Activated T-helper 2 cell treated with anti-CD3 and anti-CD28 coated beads, Interferon-gamma antibody, Interleukin-2, Interleukin-4, amounts not matched to agents 10 μg/mL and 5 μg/mL and 100 μg/mL, durations not matched to agents 14 hours and 24 hours and 36 hours (primary cell): ENCODE measurements at regions of chr12 and their contacts with region 1.

Region 1: DNA sequence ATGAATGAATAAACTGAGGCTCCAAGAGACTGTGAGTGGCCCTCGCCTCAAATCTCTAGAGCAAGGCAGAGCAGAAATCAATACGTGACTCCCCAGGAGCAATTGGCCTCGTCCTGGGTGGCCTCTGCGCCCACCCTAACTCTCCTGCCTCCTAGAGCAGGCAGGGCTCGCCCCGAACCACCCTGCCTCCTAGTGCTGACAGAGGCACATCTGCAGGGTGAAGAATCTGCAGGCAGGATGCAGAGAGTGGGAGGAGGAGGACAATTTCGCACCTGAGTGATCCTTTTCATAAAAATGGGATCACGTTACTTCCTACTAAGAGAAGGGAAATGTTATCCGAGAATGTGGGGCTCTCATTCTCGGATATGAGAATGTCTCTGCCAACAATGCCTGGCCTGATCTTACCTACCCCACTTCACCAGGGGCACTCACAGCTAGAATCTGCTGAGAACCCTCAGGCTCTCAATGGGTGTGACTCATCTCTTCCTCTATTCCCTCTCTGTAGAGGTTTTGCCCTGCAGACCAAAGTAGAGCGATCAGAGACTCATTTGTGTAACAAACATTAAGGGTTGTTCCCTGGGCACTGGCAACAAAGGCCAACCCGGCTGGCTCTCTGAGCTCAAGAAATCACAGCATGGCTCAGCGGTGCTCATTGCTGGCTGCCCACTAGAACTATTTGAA is 61.7 kb upstream of the BCL2L14 start:
- DNase-seq: peak; percentile 47
- H3K4me3 Mint-ChIP-seq: peak overlapping the region; percentile 60
- H3K27ac Mint-ChIP-seq: peak overlapping the region; percentile 96
- H3K4me1 Mint-ChIP-seq: peaks cover 77% of the 10 kb centered on the region
- H3K27me3 Mint-ChIP-seq: peaks cover 5% of the 10 kb centered on the region

Region 2: DNA sequence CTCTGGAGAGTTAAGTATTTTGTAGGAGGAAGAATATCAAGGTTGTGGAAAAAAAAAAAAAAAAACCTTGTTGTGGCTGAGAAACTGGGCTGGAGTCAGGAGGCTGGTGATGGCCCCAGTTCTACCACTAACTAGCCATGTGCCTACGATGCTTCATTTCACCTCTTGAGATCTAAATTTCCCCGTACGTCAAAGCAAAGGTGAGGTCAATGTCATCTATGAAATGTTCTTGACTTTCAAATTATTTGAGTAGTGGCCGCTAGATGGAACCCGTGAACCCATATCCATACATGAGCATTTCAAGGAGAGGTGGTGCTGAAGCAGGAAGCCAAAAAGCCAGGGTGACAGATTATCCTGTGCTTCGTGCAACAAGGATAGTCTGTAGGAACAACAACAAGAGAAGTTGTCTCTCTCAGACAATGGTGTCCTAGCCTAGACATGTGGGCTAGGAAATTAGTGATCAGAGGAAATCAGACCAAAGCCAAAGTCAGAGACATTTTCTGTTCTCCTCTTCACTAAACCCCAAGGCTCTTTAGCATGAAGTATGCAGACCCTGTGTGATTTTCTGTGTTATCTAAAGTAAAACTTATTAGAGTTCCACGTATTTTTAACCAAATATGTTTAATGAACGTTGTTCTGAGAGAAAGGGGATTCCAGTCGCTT is 455.1 kb before region 1 on chr12:
- intact Hi-C with region 1: loop called (anchors 1 kb)
- DNase-seq: peak; percentile 34
- H3K4me3 Mint-ChIP-seq: no peak overlapping the region
- H3K27ac Mint-ChIP-seq: peak overlapping the region; percentile 31
- H3K4me1 Mint-ChIP-seq: peaks cover 22% of the 10 kb centered on the region
- H3K27me3 Mint-ChIP-seq: peaks cover 50% of the 10 kb centered on the region

Region 3: DNA sequence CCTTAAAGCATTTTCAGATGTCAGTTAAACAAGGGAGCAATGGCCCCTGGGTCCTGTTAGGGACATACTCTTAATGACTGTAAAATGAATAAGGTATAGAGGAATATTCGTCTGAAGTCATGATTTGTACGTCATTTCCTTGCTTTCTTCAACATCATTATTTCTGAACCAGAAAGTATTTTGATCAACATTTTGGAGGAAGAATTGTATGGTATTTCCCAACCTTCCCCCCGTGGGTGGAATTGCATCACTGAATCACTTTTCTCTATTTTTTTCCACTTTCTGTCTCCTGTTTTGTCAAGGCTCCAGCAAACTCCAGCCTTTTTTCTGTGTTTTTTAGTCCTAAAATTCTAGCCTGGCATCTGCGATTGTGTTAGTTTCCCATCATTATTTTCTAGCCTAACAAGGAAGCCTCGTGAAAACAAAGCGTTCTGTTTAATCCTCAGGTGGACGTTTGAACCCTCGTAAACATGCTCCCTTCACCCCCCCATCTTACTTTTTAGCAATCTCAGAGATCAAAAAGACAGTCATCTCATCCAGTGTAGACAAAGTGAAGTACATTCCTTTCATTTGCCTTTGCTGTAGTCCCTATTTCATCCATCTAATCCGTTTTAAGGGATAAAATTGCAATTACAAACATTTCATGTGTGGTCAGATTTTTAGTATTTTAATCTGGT is 297.3 kb before region 1 on chr12:
- intact Hi-C with region 1: loop called (anchors 1 kb)
- DNase-seq: no peak
- H3K4me3 Mint-ChIP-seq: no peak overlapping the region
- H3K27ac Mint-ChIP-seq: no peak overlapping the region
- H3K4me1 Mint-ChIP-seq: peaks cover 42% of the 10 kb centered on the region
- H3K27me3 Mint-ChIP-seq: no peaks in the 10 kb centered on the region

Region 4: GRCh38 chr12:11771356-11771755 is 237.7 kb before region 1 on chr12:
- intact Hi-C with region 1: loop called (anchors 1 kb)
- DNase-seq: no peak
- H3K4me3 Mint-ChIP-seq: no peak overlapping the region
- H3K27ac Mint-ChIP-seq: peak overlapping the region; percentile 91
- H3K4me1 Mint-ChIP-seq: peaks cover 75% of the 10 kb centered on the region
- H3K27me3 Mint-ChIP-seq: no peaks in the 10 kb centered on the region

Region 5: DNA sequence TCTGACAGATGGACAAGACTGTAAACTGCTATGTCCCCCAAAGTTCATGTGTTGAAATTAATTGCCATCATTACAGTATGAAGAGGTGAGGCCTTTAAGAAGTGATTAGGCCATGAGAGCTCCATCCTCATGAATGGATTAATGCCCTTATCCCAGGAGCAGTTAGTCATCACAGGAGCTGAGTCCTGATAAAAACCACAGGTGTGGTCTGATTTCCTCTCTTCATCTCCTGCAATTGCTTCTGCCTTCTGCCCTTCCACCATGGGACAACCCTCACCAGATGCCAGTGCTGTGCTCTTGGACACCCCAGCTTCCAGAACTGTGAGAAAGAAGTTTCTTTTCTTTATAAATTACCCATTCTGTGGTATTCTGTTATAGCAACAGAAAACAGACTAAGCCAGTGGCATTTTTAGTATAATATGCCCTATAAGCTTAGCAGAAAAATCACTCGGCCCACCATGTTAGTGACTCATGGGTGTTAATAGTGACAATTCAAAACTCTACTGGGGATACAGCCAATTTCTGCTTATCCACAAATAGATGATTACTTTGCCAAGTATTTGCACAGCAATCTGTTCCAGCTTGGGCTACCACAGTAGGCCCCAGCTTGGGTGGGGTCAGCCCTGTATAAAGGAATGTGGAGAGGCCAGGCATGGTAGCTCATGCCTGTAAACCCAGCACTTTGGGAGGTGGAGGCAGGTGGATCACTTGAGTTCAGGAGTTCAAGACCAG is 67.3 kb before region 1 on chr12:
- intact Hi-C with region 1: no loop called
- DNase-seq: no peak
- H3K4me3 Mint-ChIP-seq: no peak overlapping the region
- H3K27ac Mint-ChIP-seq: no peak overlapping the region
- H3K4me1 Mint-ChIP-seq: peaks cover 2% of the 10 kb centered on the region
- H3K27me3 Mint-ChIP-seq: peaks cover 7% of the 10 kb centered on the region

Region 6: GRCh38 chr12:11958221-11959091 is 50.6 kb before region 1 on chr12:
- intact Hi-C with region 1: loop called (anchors 1 kb)
- DNase-seq: peak; percentile 43
- H3K4me3 Mint-ChIP-seq: peak overlapping the region; percentile 13
- H3K27ac Mint-ChIP-seq: peak overlapping the region; percentile 93
- H3K4me1 Mint-ChIP-seq: peaks cover 51% of the 10 kb centered on the region
- H3K27me3 Mint-ChIP-seq: peaks cover 10% of the 10 kb centered on the region

Region 7: DNA sequence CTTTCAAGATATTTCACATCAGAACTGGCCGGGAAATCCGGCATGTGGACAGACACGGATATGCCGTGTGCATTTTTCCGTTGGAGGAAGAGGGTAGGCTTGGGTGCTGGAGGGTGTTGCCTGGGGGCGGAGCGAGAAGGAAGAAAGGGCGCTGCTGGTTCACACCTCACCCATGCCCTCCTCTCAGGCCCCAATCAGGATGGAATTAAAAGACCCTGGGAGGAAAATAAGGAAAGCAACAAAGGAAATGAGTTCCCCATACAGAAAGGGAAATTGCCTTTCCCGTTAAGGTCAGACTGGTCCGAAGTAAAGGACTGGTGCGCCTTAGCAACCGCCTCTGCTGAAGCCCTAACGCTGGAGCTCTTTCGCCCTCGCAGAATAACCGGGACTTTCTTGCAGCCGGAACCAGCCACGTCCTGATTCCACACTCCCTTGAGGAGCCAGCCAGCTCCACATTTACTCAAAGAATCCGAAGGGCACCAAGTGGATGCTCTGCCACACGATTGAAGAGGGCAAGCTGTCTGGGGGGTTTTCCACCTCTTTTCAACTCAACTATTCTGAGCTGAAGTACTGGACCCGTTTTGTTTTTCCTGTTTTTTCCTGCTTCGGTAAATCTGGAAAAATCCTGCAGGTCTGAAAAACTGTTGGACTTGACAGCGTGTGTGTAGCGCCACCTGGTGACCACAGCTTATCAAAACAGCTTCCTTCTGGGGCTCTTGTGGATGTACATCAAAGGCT is 23.9 kb after region 1 on chr12:
- intact Hi-C with region 1: loop called (anchors 1 kb)
- DNase-seq: peak; percentile 49
- H3K4me3 Mint-ChIP-seq: peak overlapping the region; percentile 65
- H3K27ac Mint-ChIP-seq: peak overlapping the region; percentile 79
- H3K4me1 Mint-ChIP-seq: peaks cover 31% of the 10 kb centered on the region
- H3K27me3 Mint-ChIP-seq: peaks cover 8% of the 10 kb centered on the region

Region 8: GRCh38 chr12:12171991-12172521 is 163.0 kb after region 1 on chr12:
- intact Hi-C with region 1: no loop called
- DNase-seq: peak; percentile 16
- H3K4me3 Mint-ChIP-seq: no peak overlapping the region
- H3K27ac Mint-ChIP-seq: no peak overlapping the region
- H3K4me1 Mint-ChIP-seq: peaks cover 13% of the 10 kb centered on the region
- H3K27me3 Mint-ChIP-seq: peaks cover 58% of the 10 kb centered on the region